ENCODE measurements at regions of chr12 and their contacts with region 1.

Region 1: DNA sequence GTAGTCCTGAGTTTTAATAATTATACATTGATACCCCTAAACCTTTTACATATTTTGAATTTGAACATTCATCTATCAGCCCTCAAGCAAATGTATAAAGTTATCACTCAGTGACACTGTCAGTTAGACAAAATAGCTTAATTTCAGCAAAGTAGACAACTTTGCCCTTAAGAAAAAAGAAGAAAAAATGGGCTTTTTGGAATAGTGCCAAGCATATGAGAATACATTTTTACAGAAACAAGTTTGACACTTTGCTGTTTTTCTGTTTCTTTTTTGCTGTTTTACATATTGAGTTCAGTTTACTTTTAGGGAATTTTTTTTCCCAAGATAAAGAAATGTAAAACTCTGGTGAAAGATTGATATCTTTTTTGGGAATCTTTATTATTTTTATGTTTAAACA is 14.3 kb downstream of the TBK1 start:
- DNase-seq: no peak
- ATAC-seq: no peak
- H3K4me3 Mint-ChIP-seq: no peak overlapping the region
- H3K27ac Mint-ChIP-seq: no peak overlapping the region
- H3K4me1 Mint-ChIP-seq: no peaks in the 10 kb centered on the region
- H3K27me3 Mint-ChIP-seq: no peaks in the 10 kb centered on the region
- CTCF ChIP-seq: no peak

Region 2: DNA sequence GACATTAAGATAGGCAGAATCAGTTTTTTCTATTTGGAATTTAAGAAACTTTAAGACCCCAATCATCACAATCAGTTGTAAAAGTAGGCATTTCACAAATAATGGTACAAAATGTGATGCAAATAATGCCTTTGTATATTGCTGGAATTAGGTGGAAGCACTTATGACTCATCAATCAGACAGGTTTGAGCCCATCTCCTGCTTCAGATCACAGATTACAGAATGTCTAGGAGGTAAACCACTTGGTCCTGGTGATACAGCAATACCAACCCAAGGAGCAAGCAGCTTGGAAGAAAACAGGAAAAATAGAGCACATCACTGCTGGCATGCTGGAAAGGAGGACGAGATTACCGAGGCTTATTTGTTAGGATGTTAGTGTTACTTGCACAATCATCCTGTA is 133.2 kb before region 1 on chr12:
- CTCF ChIA-PET with region 1: no interaction called
- POLR2A ChIA-PET with region 1: no interaction called
- intact Hi-C with region 1: no loop called
- DNase-seq: no peak
- ATAC-seq: no peak
- H3K4me3 Mint-ChIP-seq: no peak overlapping the region
- H3K27ac Mint-ChIP-seq: no peak overlapping the region
- H3K4me1 Mint-ChIP-seq: no peaks in the 10 kb centered on the region
- H3K27me3 Mint-ChIP-seq: peaks cover 3% of the 10 kb centered on the region
- CTCF ChIP-seq: no peak

Region 3: GRCh38 chr12:64451687-64452558 is 14.3 kb before region 1 on chr12 and contains the start of gene TBK1:
- CTCF ChIA-PET with region 1: no interaction called
- POLR2A ChIA-PET with region 1: interaction called, 3 read pairs
- intact Hi-C with region 1: loop called (anchors 2 kb)
- DNase-seq: peak; percentile 82
- ATAC-seq: peak; percentile 82
- H3K4me3 Mint-ChIP-seq: peak within 1 kb of the TSS; percentile 97
- H3K27ac Mint-ChIP-seq: peak within 1 kb of the TSS; percentile 88
- H3K4me1 Mint-ChIP-seq: peaks cover 44% of the 10 kb centered on the region
- H3K27me3 Mint-ChIP-seq: no peaks in the 10 kb centered on the region
- CTCF ChIP-seq: no peak
- total RNA-seq, gene TBK1: 32.6 and 37.4 TPM in 2 replicates

Region 4: GRCh38 chr12:64767495-64767894 is 301.3 kb after region 1 on chr12:
- CTCF ChIA-PET with region 1: no interaction called
- POLR2A ChIA-PET with region 1: no interaction called
- intact Hi-C with region 1: no loop called
- DNase-seq: no peak
- ATAC-seq: no peak
- H3K4me3 Mint-ChIP-seq: no peak overlapping the region
- H3K27ac Mint-ChIP-seq: no peak overlapping the region
- H3K4me1 Mint-ChIP-seq: no peaks in the 10 kb centered on the region
- H3K27me3 Mint-ChIP-seq: peaks cover 4% of the 10 kb centered on the region
- CTCF ChIP-seq: no peak

Region 5: GRCh38 chr12:65100140-65100539 is 634.0 kb after region 1 on chr12:
- CTCF ChIA-PET with region 1: no interaction called
- POLR2A ChIA-PET with region 1: no interaction called
- intact Hi-C with region 1: no loop called
- DNase-seq: no peak
- ATAC-seq: no peak
- H3K4me3 Mint-ChIP-seq: no peak overlapping the region
- H3K27ac Mint-ChIP-seq: no peak overlapping the region
- H3K4me1 Mint-ChIP-seq: no peaks in the 10 kb centered on the region
- H3K27me3 Mint-ChIP-seq: peaks cover 21% of the 10 kb centered on the region
- CTCF ChIP-seq: no peak

Measured in activated B cell treated with CpG ODN at 0.5 μM for 24 hours (primary cell).